ENCODE measurements at regions of chr6 and their contacts with region 1.

Region 1: GRCh38 chr6:118776607-118777549 is 117.1 kb upstream of the ASF1A start:
- DNase-seq: peak; percentile 20
- ATAC-seq: peak; percentile 95
- H3K4me3 ChIP-seq: no peak overlapping the region
- H3K27ac ChIP-seq: no peak overlapping the region
- H3K4me1 ChIP-seq: peaks cover 3% of the 10 kb centered on the region; the same call in 1 of the 2 replicates
- H3K27me3 ChIP-seq: peaks cover 0 to 2% of the 10 kb centered on the region in 2 experiments; a peak in 1 of 4 replicates
- CTCF ChIP-seq: peak; percentile 70 to 74 (median 71)
- EP300 ChIP-seq: no peak
- POLR2A ChIP-seq: no peak
- RAD21 ChIP-seq: peak; percentile 77

Region 2: DNA sequence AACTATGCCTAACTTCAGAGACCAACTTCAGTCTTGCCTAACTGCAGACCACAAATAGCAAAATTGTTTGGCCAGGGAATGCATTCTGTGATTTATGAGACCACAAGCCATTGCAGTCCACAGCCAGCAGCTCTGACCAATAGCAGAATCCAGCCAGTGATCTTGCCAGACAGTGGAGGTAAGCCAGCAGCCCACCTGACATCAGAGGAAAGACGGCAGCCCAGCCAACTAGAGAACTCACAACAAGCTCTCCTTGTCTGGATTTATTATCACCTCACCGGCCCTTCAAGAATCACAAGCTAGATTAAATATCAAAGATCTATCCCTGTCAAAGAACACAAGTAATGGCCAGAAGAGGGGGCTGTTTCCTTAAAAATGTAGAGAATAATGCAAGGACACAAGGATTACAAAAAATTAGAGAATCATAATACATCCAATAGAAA is 936.3 kb before region 1 on chr6:
- CTCF ChIA-PET with region 1: interaction called, 3 read pairs
- POLR2A ChIA-PET with region 1: no interaction called
- RAD21 ChIA-PET with region 1: no interaction called
- SMC1A ChIA-PET with region 1: no interaction called
- in situ Hi-C with region 1: no loop called
- intact Hi-C with region 1: loop called (anchors 5 kb)
- DNase-seq: no peak
- ATAC-seq: peak; percentile 70
- H3K4me3 ChIP-seq: no peak overlapping the region
- H3K27ac ChIP-seq: no peak overlapping the region
- H3K4me1 ChIP-seq: no peaks in the 10 kb centered on the region
- H3K27me3 ChIP-seq: no peaks in the 10 kb centered on the region
- CTCF ChIP-seq: peak; percentile 37 to 49 (median 41); a peak in 3 of 6 replicates
- EP300 ChIP-seq: no peak
- POLR2A ChIP-seq: no peak
- RAD21 ChIP-seq: peak; percentile 65

Region 3: DNA sequence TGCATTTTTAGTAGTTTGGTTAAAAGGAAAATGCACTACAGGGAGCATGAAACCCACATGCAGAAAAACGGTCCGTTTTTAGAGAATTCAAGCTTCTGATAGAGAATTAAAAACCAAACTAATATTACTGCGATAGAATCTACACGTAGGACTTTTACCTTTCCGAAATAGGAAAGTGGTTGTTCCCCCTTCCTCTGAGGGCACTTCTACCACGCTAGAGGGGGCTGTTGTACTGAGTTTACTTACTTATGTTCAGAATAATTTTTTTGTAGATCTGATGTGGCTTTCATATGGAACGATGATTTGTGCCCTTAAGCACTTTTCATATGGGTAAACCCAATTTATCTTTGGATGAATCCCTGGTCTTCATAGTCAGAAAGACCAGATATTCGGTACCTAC is 493.1 kb before region 1 on chr6:
- CTCF ChIA-PET with region 1: no interaction called
- POLR2A ChIA-PET with region 1: no interaction called
- RAD21 ChIA-PET with region 1: no interaction called
- SMC1A ChIA-PET with region 1: no interaction called
- in situ Hi-C with region 1: loop called (anchors 10 kb)
- intact Hi-C with region 1: loop called (anchors 5 kb)
- DNase-seq: no peak
- ATAC-seq: peak; percentile 63
- H3K4me3 ChIP-seq: no peak overlapping the region
- H3K27ac ChIP-seq: no peak overlapping the region
- H3K4me1 ChIP-seq: peaks cover 8% of the 10 kb centered on the region
- H3K27me3 ChIP-seq: peaks cover 0 to 7% of the 10 kb centered on the region in 2 experiments; a peak in 1 of 4 replicates
- CTCF ChIP-seq: peak; percentile 49 to 65 (median 55)
- EP300 ChIP-seq: no peak
- POLR2A ChIP-seq: no peak
- RAD21 ChIP-seq: peak; percentile 68

Region 4: GRCh38 chr6:118485601-118486550 is 291.0 kb before region 1 on chr6:
- CTCF ChIA-PET with region 1: no interaction called
- POLR2A ChIA-PET with region 1: no interaction called
- RAD21 ChIA-PET with region 1: no interaction called
- SMC1A ChIA-PET with region 1: no interaction called
- in situ Hi-C with region 1: no loop called
- intact Hi-C with region 1: no loop called
- DNase-seq: peak; percentile 35
- ATAC-seq: peak; percentile 96
- H3K4me3 ChIP-seq: no peak overlapping the region
- H3K27ac ChIP-seq: 0 out of 2 replicates have a peak overlapping the region, but pooled peaks have one; percentile 35
- H3K4me1 ChIP-seq: peaks cover 10% of the 10 kb centered on the region; the same call in 1 of the 2 replicates
- H3K27me3 ChIP-seq: no peaks in the 10 kb centered on the region
- CTCF ChIP-seq: no peak
- EP300 ChIP-seq: peak; percentile 45 to 66; a peak in 3 of 4 replicates
- POLR2A ChIP-seq: no peak
- RAD21 ChIP-seq: no peak

Region 5: DNA sequence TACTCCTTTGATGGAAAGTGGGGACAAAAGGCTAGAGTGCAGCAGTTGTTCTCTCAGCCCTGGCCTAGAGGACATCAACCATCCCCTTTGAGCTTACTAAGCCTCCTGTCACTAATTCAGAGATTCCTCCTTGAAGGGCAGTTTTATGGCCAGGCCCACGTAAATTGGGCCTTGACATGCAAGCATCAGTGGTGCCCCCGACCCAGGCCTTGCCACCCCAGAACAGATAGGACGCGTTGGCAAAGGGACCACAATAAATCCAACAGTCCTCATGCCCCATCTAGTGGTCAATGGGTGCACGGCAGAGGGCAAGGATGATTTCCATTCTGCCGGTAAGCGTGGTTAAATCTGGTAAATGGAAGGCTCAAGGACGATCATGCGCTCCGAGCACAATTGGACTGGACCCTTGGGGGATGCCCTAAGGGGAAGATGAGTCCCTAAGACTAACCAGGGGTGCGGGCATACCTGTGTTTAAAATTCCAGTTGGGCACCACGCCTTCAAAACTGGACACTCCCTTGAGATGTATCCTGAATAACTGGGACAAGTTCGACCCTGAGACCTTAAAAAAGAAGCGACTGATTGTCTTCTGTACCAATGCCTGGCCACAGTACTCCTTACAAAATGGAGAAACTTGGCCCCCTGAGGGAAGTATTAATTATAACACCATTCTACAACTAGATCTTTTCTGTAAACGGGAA is 158.1 kb before region 1 on chr6:
- CTCF ChIA-PET with region 1: interaction called, 3 read pairs
- POLR2A ChIA-PET with region 1: no interaction called
- RAD21 ChIA-PET with region 1: no interaction called
- SMC1A ChIA-PET with region 1: no interaction called
- in situ Hi-C with region 1: no loop called
- intact Hi-C with region 1: loop called (anchors 1 kb)
- DNase-seq: no peak
- ATAC-seq: peak; percentile 98
- H3K4me3 ChIP-seq: no peak overlapping the region
- H3K27ac ChIP-seq: no peak overlapping the region
- H3K4me1 ChIP-seq: no peaks in the 10 kb centered on the region
- H3K27me3 ChIP-seq: no peaks in the 10 kb centered on the region
- CTCF ChIP-seq: peak; percentile 92 to 96 (median 92)
- EP300 ChIP-seq: no peak
- POLR2A ChIP-seq: no peak
- RAD21 ChIP-seq: peak; percentile 88

Region 6: GRCh38 chr6:118709859-118710350 is 67.0 kb before region 1 on chr6:
- CTCF ChIA-PET with region 1: interaction called, 7 read pairs
- POLR2A ChIA-PET with region 1: interaction called, 4 read pairs
- RAD21 ChIA-PET with region 1: no interaction called
- SMC1A ChIA-PET with region 1: no interaction called
- in situ Hi-C with region 1: no loop called
- intact Hi-C with region 1: loop called (anchors 5 kb)
- DNase-seq: peak; percentile 85
- ATAC-seq: peak; percentile 89
- H3K4me3 ChIP-seq: peak overlapping the region; percentile 81
- H3K27ac ChIP-seq: peak overlapping the region; percentile 84
- H3K4me1 ChIP-seq: peaks cover 33% of the 10 kb centered on the region
- H3K27me3 ChIP-seq: no peaks in the 10 kb centered on the region
- CTCF ChIP-seq: no peak
- EP300 ChIP-seq: no peak
- POLR2A ChIP-seq: peak; percentile 61
- RAD21 ChIP-seq: no peak

Measured in GM12878 (cell line).